Activated CD8-positive, alpha-beta T cell treated with anti-CD3 and anti-CD28 coated beads for 36 hours (primary cell): ENCODE measurements at regions of chr7 and their contacts with region 1.

Region 1: DNA sequence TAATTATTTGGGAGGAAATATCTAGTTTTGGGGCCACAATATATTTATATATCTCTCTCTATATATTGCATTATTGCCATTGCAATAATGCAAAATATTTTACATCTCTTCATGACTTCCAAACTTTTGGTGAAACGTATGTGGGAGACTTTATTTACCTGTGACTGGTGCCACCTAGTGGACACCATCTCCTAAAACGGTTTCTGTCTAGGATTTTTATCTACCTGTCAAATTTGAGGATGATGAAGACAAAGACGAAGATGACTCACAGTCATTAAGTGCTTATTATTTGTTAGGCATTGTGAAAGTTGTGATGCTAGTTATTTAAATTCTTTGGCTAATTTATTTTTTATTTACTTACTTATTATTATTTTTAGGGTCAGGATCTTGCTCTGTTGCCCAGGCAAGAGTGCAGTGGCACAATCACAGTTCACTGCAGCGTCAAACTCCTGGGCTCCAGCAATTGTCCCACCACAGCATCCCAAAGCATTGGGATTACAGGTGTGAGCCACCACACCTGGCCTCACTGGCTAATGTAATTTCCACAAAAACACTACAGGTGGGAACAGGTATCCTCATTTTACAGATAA is 18.7 kb upstream of the CBLL1 start:
- DNase-seq: peak; percentile 75
- ATAC-seq: no peak
- H3K4me3 Mint-ChIP-seq: no peak overlapping the region
- H3K27ac Mint-ChIP-seq: no peak overlapping the region
- H3K4me1 Mint-ChIP-seq: no peaks in the 10 kb centered on the region
- H3K27me3 Mint-ChIP-seq: peaks cover 9% of the 10 kb centered on the region
- CTCF ChIP-seq: peak; percentile 82

Region 2: GRCh38 chr7:107462740-107463444 is 262.4 kb before region 1 on chr7:
- CTCF ChIA-PET with region 1: interaction called, 48 read pairs
- POLR2A ChIA-PET with region 1: no interaction called
- intact Hi-C with region 1: loop called (anchors 2 kb)
- DNase-seq: peak; percentile 56
- ATAC-seq: peak; percentile 82
- H3K4me3 Mint-ChIP-seq: no peak overlapping the region
- H3K27ac Mint-ChIP-seq: no peak overlapping the region
- H3K4me1 Mint-ChIP-seq: no peaks in the 10 kb centered on the region
- H3K27me3 Mint-ChIP-seq: no peaks in the 10 kb centered on the region
- CTCF ChIP-seq: peak; percentile 44

Region 3: GRCh38 chr7:107579885-107580715 is 145.1 kb before region 1 on chr7 and contains the start of gene BCAP29:
- CTCF ChIA-PET with region 1: interaction called, 3 read pairs
- POLR2A ChIA-PET with region 1: no interaction called
- intact Hi-C with region 1: loop called (anchors 10 kb)
- DNase-seq: peak; percentile 73
- ATAC-seq: peak; percentile 98
- H3K4me3 Mint-ChIP-seq: peak within 1 kb of the TSS; percentile 87
- H3K27ac Mint-ChIP-seq: peak within 1 kb of the TSS; percentile 88
- H3K4me1 Mint-ChIP-seq: peaks cover 21% of the 10 kb centered on the region
- H3K27me3 Mint-ChIP-seq: no peaks in the 10 kb centered on the region
- CTCF ChIP-seq: no peak
- total RNA-seq, gene BCAP29: 24.0 to 27.7 TPM

Region 4: DNA sequence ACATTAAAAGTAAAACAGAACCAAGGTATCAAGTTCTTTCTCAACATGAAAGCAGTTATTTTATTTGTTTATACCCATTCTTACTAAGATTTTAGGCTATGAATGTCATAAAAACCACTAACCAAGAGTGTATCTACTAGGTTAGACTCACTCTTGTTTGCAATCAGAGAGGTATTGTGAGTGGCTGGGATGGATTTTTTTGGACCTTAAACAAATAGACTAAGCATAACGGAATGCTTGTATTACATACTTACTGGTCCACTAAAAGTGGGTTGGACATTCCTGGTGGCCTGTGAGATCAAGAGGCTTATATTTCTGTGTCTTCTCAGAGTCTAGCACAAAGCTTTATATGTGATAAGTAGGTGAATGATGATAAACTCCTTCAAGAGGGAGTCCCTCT is 13.9 kb before region 1 on chr7:
- CTCF ChIA-PET with region 1: interaction called, 12 read pairs
- POLR2A ChIA-PET with region 1: no interaction called
- intact Hi-C with region 1: no loop called
- DNase-seq: no peak
- ATAC-seq: no peak
- H3K4me3 Mint-ChIP-seq: no peak overlapping the region
- H3K27ac Mint-ChIP-seq: no peak overlapping the region
- H3K4me1 Mint-ChIP-seq: no peaks in the 10 kb centered on the region
- H3K27me3 Mint-ChIP-seq: peaks cover 9% of the 10 kb centered on the region
- CTCF ChIP-seq: no peak

Region 5: DNA sequence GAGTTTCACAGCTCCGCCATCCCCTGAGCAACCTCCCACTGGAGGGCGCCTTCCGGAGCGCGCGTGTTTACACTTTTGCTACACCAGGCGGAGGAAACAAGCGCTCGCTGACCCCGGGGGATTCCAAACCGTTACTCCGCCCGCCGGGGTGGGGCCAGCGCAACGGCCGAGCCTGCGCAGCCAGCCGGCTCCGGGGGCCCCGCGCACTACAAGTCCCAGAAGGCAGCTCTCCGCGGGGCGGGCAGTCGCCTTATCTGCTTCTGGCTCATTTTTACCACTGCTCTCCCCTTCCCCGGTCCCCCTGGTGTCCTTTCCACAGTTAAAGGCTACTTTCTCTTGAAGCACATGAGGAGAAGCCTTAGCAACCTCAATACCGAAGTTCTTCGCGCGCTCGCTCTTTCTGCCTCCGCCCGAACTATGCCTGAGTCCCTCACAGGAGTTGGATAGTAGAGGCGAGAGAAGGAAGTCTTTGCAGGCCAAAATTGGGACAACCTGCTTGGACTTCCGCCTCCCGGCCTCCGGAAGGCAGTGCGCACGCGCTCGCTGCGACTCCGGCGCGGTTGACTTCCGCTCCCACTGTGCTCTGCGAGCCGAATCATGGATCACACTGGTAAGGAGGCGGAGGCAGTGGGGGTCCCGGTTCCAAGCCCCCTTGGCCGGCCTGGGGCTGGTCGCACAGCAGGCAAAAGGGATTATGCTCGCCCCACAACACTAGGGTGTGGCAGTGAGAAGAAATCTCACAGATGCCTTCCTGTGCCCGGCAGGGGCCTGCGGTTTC is 18.5 kb after region 1 on chr7 and contains the start of gene CBLL1:
- CTCF ChIA-PET with region 1: interaction called, 15 read pairs
- POLR2A ChIA-PET with region 1: no interaction called
- intact Hi-C with region 1: no loop called
- DNase-seq: peak; percentile 99
- ATAC-seq: peak; percentile 94
- H3K4me3 Mint-ChIP-seq: peak within 1 kb of the TSS; percentile 87
- H3K27ac Mint-ChIP-seq: peak within 1 kb of the TSS; percentile 100
- H3K4me1 Mint-ChIP-seq: peaks cover 40% of the 10 kb centered on the region
- H3K27me3 Mint-ChIP-seq: no peaks in the 10 kb centered on the region
- CTCF ChIP-seq: peak; percentile 69
- total RNA-seq, gene CBLL1: 31.7 to 38.2 TPM